ENCODE measurements at regions of chr13 and their contacts with region 1.

Region 1: GRCh38 chr13:99686157-99686572 is 184.9 kb downstream of the TM9SF2 start:
- DNase-seq: peak; percentile 38
- ATAC-seq: peak; percentile 11
- H3K4me3 Mint-ChIP-seq: peak overlapping the region; percentile 62
- H3K27ac Mint-ChIP-seq: peak overlapping the region; percentile 100
- H3K4me1 Mint-ChIP-seq: peaks cover 80% of the 10 kb centered on the region
- H3K27me3 Mint-ChIP-seq: peaks cover 15% of the 10 kb centered on the region
- CTCF ChIP-seq: no peak

Region 2: GRCh38 chr13:99386911-99387788 is 299.0 kb before region 1 on chr13:
- CTCF ChIA-PET with region 1: no interaction called
- POLR2A ChIA-PET with region 1: no interaction called
- DNase-seq: peak; percentile 90
- ATAC-seq: peak; percentile 72
- H3K4me3 Mint-ChIP-seq: no peak overlapping the region
- H3K27ac Mint-ChIP-seq: no peak overlapping the region; the same call in 1 of the 2 replicates
- H3K4me1 Mint-ChIP-seq: peaks cover 20% of the 10 kb centered on the region
- H3K27me3 Mint-ChIP-seq: no peaks in the 10 kb centered on the region
- CTCF ChIP-seq: peak; percentile 87

Region 3: DNA sequence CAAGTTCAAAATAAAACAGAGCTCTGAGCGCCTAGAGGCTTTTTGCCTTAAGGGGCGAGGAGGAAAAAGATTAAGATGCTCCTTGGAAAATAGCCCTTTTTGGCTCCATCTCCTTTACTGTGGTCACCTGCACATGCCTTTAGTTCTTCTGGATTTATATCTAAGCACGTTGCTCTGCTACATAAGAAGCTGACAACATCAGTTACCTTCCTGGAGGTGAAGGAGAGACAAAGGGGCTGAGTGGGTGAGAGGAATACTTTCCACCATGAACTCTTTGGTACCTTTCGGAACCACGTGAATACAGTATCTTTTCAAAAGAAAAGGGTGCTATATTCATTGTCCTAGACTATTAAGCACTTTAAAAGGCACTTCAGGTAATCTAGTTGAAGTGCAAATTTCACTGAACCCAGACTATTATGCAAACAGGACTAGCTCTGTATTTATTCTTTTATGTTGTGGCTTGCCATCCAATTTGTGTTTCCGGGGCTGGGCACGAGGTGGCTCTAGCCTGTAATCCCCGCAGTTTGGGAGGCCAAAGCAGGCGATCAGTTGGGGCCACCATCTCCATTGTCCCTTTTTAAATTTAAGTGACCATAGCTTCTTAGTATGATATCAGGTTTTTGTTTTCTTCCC is 16.6 kb after region 1 on chr13:
- CTCF ChIA-PET with region 1: interaction called, 35 read pairs
- POLR2A ChIA-PET with region 1: interaction called, 26 read pairs
- DNase-seq: peak; percentile 38
- ATAC-seq: peak; percentile 61
- H3K4me3 Mint-ChIP-seq: peak overlapping the region; percentile 27; the same call in 1 of the 2 replicates
- H3K27ac Mint-ChIP-seq: peak overlapping the region; percentile 97
- H3K4me1 Mint-ChIP-seq: peaks cover 68% of the 10 kb centered on the region
- H3K27me3 Mint-ChIP-seq: no peaks in the 10 kb centered on the region
- CTCF ChIP-seq: no peak

Measured in WTC11 (cell line).